SK-N-SH (cell line): ENCODE measurements at regions of chr3 and their contacts with region 1.

Region 1: DNA sequence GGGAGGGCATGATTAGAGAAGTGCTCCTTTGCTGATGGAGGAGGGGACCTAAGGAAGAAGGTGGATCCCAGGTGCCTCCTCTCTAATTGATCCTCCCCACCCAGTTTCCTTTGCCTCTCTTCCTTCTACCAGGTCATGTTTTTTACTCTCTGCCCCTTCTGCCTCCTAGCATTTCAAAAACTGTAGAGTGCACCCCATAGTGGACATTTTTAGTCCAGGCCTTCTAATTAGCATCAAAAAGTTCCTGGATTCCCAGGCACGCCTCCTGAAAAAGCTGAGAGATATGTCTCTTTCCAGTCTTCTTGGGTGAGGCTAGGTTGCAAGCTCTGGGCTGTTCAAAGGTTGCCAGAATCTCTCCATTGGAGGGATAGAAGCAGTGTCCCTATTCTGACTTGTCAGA is 18.7 kb upstream of the ITGB5 start:
- DNase-seq: no peak
- H3K4me3 ChIP-seq: no peak overlapping the region
- H3K27ac ChIP-seq: no peak overlapping the region
- H3K4me1 ChIP-seq: no peaks in the 10 kb centered on the region; a peak in 1 of 4 replicates
- H3K27me3 ChIP-seq: no peaks in the 10 kb centered on the region
- CTCF ChIP-seq: no peak
- EP300 ChIP-seq: no peak
- RAD21 ChIP-seq: no peak

Region 2: GRCh38 chr3:124786441-124787241 is 119.2 kb before region 1 on chr3:
- CTCF ChIA-PET with region 1: interaction called, 114 read pairs
- POLR2A ChIA-PET with region 1: no interaction called
- DNase-seq: no peak
- H3K4me3 ChIP-seq: no peak overlapping the region
- H3K27ac ChIP-seq: peak overlapping the region; percentile 47 to 83; a peak in 3 of 4 replicates
- H3K4me1 ChIP-seq: peaks cover 21 to 33% of the 10 kb centered on the region in 2 experiments
- H3K27me3 ChIP-seq: no peaks in the 10 kb centered on the region
- CTCF ChIP-seq: peak; percentile 66
- EP300 ChIP-seq: no peak
- RAD21 ChIP-seq: peak; percentile 63

Region 3: GRCh38 chr3:124887177-124887931 is 18.5 kb before region 1 on chr3 and contains the start of gene ITGB5:
- CTCF ChIA-PET with region 1: interaction called, 23 read pairs
- POLR2A ChIA-PET with region 1: interaction called, 5 read pairs
- DNase-seq: peak; percentile 90
- H3K4me3 ChIP-seq: peak within 1 kb of the TSS; percentile 76 to 79
- H3K27ac ChIP-seq: peak within 1 kb of the TSS; percentile 71 to 92
- H3K4me1 ChIP-seq: peaks cover 30% of the 10 kb centered on the region in 2 experiments
- H3K27me3 ChIP-seq: no peaks in the 10 kb centered on the region
- CTCF ChIP-seq: no peak
- EP300 ChIP-seq: 0 out of 4 replicates have a peak, but pooled peaks of 1 of the 2 experiments have one; percentile 5
- RAD21 ChIP-seq: 0 out of 2 replicates have a peak, but pooled peaks have one; percentile 4
- polyA plus RNA-seq, gene ITGB5: 328 and 481 TPM in 2 replicates

Region 4: GRCh38 chr3:124928333-124929202 is 22.7 kb after region 1 on chr3:
- CTCF ChIA-PET with region 1: interaction called, 31 read pairs
- POLR2A ChIA-PET with region 1: no interaction called
- DNase-seq: peak; percentile 39
- H3K4me3 ChIP-seq: peak overlapping the region in 1 of 2 experiments; percentile 48; a peak in 1 of 4 replicates
- H3K27ac ChIP-seq: no peak overlapping the region
- H3K4me1 ChIP-seq: no peaks in the 10 kb centered on the region; a peak in 1 of 4 replicates
- H3K27me3 ChIP-seq: no peaks in the 10 kb centered on the region
- CTCF ChIP-seq: peak; percentile 90
- EP300 ChIP-seq: no peak
- RAD21 ChIP-seq: peak; percentile 80